ENCODE measurements at regions of chr4 and their contacts with region 1.

Region 1: DNA sequence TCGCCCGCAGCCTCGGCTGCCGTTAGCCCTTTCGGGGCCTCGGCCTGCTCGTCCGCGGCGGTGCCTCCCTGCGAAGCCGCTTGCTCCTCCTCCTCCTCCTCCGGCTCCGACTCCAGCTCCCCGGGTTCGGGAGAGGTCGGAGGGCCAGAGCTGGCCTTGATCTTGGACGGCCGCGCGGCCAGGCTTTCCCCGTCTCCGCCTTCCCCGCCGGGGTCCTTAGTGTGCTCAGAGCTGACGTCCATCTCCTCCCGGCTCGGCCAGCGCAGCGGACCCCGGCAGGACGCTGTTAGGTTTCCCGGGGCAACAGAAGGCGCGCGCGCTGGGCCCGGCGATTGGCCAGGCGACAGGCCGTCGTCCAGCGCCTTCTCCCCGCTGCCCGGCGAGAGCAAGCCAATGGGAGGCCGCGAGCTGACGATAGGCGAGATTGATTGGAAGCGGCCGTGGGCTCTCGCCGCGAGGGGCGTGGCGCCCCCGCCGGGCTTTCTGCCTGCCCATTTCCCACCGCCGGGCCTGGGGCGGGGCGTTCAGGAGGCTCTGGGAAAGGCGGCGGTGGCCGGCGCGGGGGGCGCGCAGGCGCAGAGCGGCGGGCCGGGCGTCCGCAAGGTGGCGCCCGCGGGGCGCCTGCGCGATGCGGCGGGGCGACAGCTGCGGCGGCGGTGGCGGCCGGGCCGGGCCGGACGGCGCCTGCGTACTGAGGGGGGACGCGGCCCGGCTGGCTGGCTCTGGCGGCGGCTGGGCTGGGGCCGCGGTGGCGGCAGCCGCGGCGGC is at the start of gene TADA2B:
- DNase-seq: peak; percentile 95
- ATAC-seq: peak; percentile 91
- H3K4me3 Mint-ChIP-seq: peak within 1 kb of the TSS; percentile 84
- H3K27ac Mint-ChIP-seq: peak within 1 kb of the TSS; percentile 72
- H3K4me1 Mint-ChIP-seq: peaks cover 40% of the 10 kb centered on the region
- H3K27me3 Mint-ChIP-seq: peaks cover 11% of the 10 kb centered on the region
- total RNA-seq, gene TADA2B: 16.9 to 21.4 TPM

Region 2: GRCh38 chr4:6986781-6987587 is 55.9 kb before region 1 on chr4:
- CTCF ChIA-PET with region 1: interaction called, 13 read pairs
- DNase-seq: peak; percentile 95
- ATAC-seq: peak; percentile 95
- H3K4me3 Mint-ChIP-seq: peak overlapping the region; percentile 92
- H3K27ac Mint-ChIP-seq: peak overlapping the region; percentile 90
- H3K4me1 Mint-ChIP-seq: peaks cover 73% of the 10 kb centered on the region
- H3K27me3 Mint-ChIP-seq: no peaks in the 10 kb centered on the region

Region 3: GRCh38 chr4:7055111-7055989 is 12.5 kb after region 1 on chr4:
- CTCF ChIA-PET with region 1: interaction called, 11 read pairs
- DNase-seq: no peak
- ATAC-seq: no peak
- H3K4me3 Mint-ChIP-seq: no peak overlapping the region
- H3K27ac Mint-ChIP-seq: no peak overlapping the region
- H3K4me1 Mint-ChIP-seq: peaks cover 24% of the 10 kb centered on the region
- H3K27me3 Mint-ChIP-seq: no peaks in the 10 kb centered on the region

Region 4: DNA sequence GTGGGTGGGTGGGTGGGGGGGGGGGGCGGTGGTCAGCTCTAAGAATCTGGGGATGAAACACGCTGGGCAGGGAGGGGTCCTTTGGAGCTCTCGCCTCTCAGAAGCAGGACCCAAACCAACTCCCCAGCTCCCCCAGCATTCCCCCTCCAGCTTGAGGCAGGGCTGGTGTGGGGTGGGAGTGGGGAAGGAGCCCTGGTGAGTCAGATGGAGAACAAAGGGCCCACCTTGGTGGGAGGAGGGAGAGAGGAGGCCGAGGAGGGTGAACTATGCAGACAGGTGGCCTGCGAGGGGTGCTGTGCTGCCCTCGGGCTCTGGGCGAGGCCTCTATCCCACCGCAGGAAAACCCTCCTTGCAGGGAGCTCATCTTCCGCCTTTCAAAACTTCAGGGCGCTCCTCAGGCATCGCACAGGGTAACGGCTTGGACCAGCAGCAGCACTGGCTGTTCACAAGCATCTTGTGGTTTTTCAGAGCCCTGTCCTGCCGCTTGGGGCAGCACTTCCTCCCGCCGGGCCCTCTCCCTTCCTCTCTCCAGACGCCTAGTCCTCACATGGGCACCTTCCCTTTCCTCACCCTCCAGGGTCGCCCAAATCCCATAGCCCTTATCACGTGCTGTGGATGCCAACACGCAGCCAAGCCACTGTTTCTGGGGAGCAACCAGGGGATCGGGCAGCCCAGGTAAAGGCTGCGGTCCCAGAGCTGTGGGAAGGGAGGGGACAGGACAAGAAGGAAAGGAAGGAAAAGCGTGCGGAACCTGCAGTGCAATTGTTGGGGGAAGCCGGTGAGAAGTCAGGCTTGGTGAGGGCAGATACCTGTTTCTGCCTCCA is 59.0 kb after region 1 on chr4:
- CTCF ChIA-PET with region 1: interaction called, 13 read pairs
- DNase-seq: peak; percentile 78
- ATAC-seq: peak; percentile 55
- H3K4me3 Mint-ChIP-seq: peak overlapping the region; percentile 85
- H3K27ac Mint-ChIP-seq: peak overlapping the region; percentile 9
- H3K4me1 Mint-ChIP-seq: peaks cover 13% of the 10 kb centered on the region
- H3K27me3 Mint-ChIP-seq: peaks cover 27% of the 10 kb centered on the region

Region 5: GRCh38 chr4:7161721-7162214 is 118.9 kb after region 1 on chr4:
- CTCF ChIA-PET with region 1: no interaction called
- DNase-seq: no peak
- ATAC-seq: no peak
- H3K4me3 Mint-ChIP-seq: no peak overlapping the region
- H3K27ac Mint-ChIP-seq: no peak overlapping the region
- H3K4me1 Mint-ChIP-seq: no peaks in the 10 kb centered on the region
- H3K27me3 Mint-ChIP-seq: peaks cover 36% of the 10 kb centered on the region